OCI-LY7 (cell line): ENCODE measurements at regions of chr7 and their contacts with region 1.

Region 1: GRCh38 chr7:132723506-132724081 is 147.3 kb upstream of the PLXNA4 start:
- DNase-seq: no peak
- H3K4me3 ChIP-seq: no peak overlapping the region
- H3K27ac ChIP-seq: no peak overlapping the region
- H3K4me1 ChIP-seq: no peaks in the 10 kb centered on the region
- CTCF ChIP-seq: no peak

Region 2: GRCh38 chr7:133207687-133208086 is 484.1 kb after region 1 on chr7:
- CTCF ChIA-PET with region 1: no interaction called
- POLR2A ChIA-PET with region 1: no interaction called
- intact Hi-C with region 1: loop called (anchors 10 kb)
- DNase-seq: peak; percentile 29
- H3K4me3 ChIP-seq: no peak overlapping the region
- H3K27ac ChIP-seq: no peak overlapping the region
- H3K4me1 ChIP-seq: no peaks in the 10 kb centered on the region
- CTCF ChIP-seq: peak; percentile 71